ENCODE measurements at regions of chr2 and their contacts with region 1.

Region 1: DNA sequence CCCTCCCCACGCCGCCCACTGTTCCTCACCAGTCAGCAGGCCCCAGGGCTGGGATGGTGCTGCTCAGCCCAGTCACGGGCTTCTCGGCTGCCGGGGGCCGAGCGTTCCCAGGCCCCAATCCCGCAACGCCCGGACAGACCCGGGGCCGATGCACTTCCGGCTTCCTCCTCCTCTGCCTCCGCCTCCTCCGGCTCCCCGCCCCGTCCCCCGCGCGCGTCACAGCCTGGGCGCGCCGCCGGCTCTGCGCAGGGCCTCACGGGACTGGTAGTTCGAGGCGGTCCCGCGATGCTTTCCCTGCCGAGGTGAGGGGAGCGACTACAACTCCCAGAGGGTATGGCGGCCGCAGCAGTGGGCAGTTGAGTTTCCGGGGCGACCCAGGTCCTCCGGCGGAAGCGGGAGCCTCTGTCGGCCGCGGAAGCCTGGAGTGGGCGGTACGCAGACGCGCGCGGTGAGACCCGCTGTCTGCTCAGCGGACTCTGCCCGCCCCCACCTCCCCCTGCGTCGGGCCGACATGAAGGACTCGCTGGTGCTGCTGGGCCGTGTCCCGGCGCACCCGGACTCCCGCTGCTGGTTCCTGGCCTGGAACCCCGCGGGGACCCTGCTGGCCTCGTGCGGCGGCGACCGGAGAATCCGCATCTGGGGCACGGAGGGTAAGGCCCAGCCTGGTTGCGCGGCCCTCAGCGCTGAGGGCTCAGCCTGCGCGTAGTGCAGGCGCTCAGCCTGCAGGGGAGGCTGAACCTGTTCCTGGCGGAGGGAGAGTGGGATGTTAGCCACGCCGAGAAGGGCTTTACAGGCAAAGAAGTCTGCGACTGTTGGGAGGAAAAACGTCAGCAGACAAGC is at the starts of genes CIAO1 and TMEM127:
- DNase-seq: peak; percentile 98
- H3K4me3 Mint-ChIP-seq: peak within 1 kb of the TSS; percentile 93
- H3K27ac Mint-ChIP-seq: peak within 1 kb of the TSS; percentile 68
- H3K4me1 Mint-ChIP-seq: peaks cover 25% of the 10 kb centered on the region
- H3K27me3 Mint-ChIP-seq: no peaks in the 10 kb centered on the region
- CTCF ChIP-seq: no peak
- total RNA-seq, gene CIAO1: 62.3 and 63.3 TPM in 2 replicates
- total RNA-seq, gene TMEM127: 31.5 and 40.0 TPM in 2 replicates

Region 2: DNA sequence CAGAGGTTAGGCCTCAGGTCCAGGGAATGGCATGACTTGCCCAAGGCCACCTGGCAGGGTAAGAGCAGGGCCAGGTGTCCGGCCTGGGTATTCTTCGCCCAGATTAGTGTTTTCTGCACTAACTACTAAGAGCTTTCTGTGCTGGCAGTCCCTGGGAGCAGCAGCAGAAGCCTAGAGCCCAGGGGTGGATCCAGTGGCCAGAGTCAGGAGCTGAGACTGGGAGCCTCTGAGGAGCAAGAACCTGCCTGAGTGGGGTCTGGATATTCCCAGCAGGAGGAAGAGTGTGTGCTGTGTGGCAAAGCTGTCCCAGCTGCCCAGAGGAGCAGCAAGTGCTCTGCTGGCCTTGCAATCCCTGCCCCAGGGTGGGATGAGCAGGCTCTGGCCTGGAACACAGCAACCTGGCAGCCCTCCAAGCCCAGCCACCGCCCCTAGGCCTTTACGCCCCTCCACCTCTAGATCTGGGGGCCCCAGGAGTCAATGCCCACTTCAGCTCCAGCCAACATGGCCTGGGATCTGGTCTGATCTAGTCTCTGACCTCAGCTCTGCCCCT is 200.6 kb before region 1 on chr2:
- CTCF ChIA-PET with region 1: no interaction called
- POLR2A ChIA-PET with region 1: no interaction called
- intact Hi-C with region 1: loop called (anchors 10 kb)
- DNase-seq: no peak
- H3K4me3 Mint-ChIP-seq: no peak overlapping the region
- H3K27ac Mint-ChIP-seq: no peak overlapping the region
- H3K4me1 Mint-ChIP-seq: peaks cover 6% of the 10 kb centered on the region
- H3K27me3 Mint-ChIP-seq: no peaks in the 10 kb centered on the region
- CTCF ChIP-seq: no peak

Region 3: DNA sequence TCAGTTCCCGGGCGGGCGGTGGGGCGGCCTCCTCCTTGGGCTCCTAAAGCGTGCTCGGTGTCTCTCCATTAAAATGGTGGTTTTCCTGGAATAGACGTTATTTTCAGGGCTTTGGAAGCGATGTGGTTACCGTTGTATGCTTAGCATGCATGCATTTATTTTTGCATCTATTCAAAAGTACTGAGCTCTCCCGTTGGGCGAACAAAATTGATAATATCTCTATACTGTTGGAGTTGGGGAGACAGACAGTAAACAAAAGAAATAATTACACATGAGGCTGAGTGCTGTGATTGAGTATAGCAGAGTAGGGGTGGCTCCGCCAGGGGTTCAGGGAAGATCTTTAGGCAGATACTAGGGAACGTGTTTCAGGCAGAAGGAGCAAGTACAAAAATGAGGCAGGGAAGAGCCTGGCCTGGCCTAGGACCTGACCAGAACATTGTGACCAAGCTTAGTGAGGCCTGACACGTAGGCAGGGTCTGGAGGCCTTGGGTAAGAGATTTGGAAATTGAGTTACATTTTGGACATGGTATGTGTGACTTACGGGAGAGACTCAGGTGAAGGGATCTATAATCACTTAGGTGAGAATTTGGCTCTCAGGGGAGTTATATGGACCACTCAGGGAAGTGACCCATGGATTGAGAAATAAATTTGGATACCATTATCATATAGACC is 70.2 kb after region 1 on chr2:
- CTCF ChIA-PET with region 1: interaction called, 3 read pairs
- POLR2A ChIA-PET with region 1: interaction called, 6 read pairs
- intact Hi-C with region 1: loop called (anchors 5 kb)
- DNase-seq: no peak
- H3K4me3 Mint-ChIP-seq: peak overlapping the region; percentile 68
- H3K27ac Mint-ChIP-seq: peak overlapping the region; percentile 39
- H3K4me1 Mint-ChIP-seq: peaks cover 42% of the 10 kb centered on the region
- H3K27me3 Mint-ChIP-seq: no peaks in the 10 kb centered on the region
- CTCF ChIP-seq: no peak

Measured in MCF 10A (cell line).